ENCODE measurements at regions of chr9 and their contacts with region 1.

Region 1: GRCh38 chr9:114911167-114911821 is 19.1 kb downstream of the TNFSF8 start:
- DNase-seq: no peak
- H3K4me3 ChIP-seq: no peak overlapping the region
- H3K27ac ChIP-seq: no peak overlapping the region
- H3K4me1 ChIP-seq: peaks cover 0 to 10% (median 0%) of the 10 kb centered on the region in 4 donors
- H3K27me3 ChIP-seq: no peaks in the 10 kb centered on the region
- CTCF ChIP-seq: peak; percentile 30 to 58 (median 52)
- EP300 ChIP-seq: no peak
- POLR2A ChIP-seq: no peak

Region 2: GRCh38 chr9:114681594-114682332 is 229.5 kb before region 1 on chr9 and contains the start of gene TEX48:
- intact Hi-C with region 1: loop called (anchors 5 kb)
- DNase-seq: peak; percentile 71
- H3K4me3 ChIP-seq: no peak within 1 kb of the TSS
- H3K27ac ChIP-seq: no peak within 1 kb of the TSS
- H3K4me1 ChIP-seq: peaks cover 0 to 14% (median 10%) of the 10 kb centered on the region in 4 donors
- H3K27me3 ChIP-seq: no peaks in the 10 kb centered on the region
- CTCF ChIP-seq: peak in 3 of 4 experiments; percentile 35 to 45 (median 35)
- EP300 ChIP-seq: no peak
- POLR2A ChIP-seq: no peak
- total RNA-seq, gene TEX48: not detected

Region 3: GRCh38 chr9:114738581-114739316 is 172.5 kb before region 1 on chr9:
- intact Hi-C with region 1: loop called (anchors 5 kb)
- DNase-seq: peak; percentile 86
- H3K4me3 ChIP-seq: no peak overlapping the region
- H3K27ac ChIP-seq: no peak overlapping the region
- H3K4me1 ChIP-seq: no peaks in the 10 kb centered on the region
- H3K27me3 ChIP-seq: no peaks in the 10 kb centered on the region
- CTCF ChIP-seq: peak; percentile 65 to 80 (median 74)
- EP300 ChIP-seq: no peak
- POLR2A ChIP-seq: no peak

Region 4: GRCh38 chr9:114754581-114754980 is 156.7 kb before region 1 on chr9:
- intact Hi-C with region 1: no loop called
- DNase-seq: no peak
- H3K4me3 ChIP-seq: no peak overlapping the region
- H3K27ac ChIP-seq: no peak overlapping the region
- H3K4me1 ChIP-seq: no peaks in the 10 kb centered on the region
- H3K27me3 ChIP-seq: no peaks in the 10 kb centered on the region
- CTCF ChIP-seq: no peak
- EP300 ChIP-seq: no peak
- POLR2A ChIP-seq: no peak

Region 5: DNA sequence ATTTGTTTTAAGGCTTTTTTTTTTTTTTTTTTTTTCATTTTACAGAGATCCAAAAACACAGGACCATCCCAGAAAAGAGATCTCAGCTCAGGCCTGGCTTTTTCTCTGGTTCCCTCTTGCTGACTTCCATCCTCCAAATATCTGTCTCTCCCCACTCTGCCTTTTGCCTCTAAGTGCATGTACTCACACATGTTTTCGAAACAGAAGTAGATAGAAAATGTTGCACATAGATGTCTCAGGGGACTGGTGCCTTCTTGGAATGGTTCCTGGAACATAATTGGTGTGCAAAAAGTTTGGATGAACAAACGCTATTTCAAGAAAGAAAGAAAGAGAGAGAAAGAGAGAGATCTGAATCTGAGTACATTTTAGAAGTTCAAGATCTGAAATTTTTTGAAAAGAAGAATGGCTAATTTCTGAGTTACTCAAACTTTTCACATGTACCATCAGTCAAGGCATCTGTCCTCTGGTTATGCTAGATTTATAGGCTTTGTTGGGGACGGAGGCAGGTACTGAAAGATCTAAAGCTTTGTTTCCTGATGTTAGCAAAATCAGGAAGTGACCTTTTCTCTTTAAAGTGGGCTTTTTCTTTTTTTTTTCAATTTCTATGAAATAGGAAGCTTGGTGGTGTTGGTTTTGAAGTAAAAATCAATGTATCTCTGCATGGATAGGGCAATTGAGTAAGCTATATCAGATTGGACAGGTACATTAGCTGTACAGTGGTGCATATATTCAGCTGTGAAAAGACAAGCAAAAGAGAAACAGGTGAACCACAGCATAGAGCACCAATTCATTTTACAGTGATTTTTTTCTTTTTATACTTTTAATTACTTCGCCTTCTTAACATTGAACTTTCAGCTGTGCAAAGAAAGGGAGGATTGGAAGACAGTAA is 27.6 kb after region 1 on chr9:
- intact Hi-C with region 1: no loop called
- DNase-seq: no peak
- H3K4me3 ChIP-seq: no peak overlapping the region
- H3K27ac ChIP-seq: no peak overlapping the region
- H3K4me1 ChIP-seq: no peaks in the 10 kb centered on the region
- H3K27me3 ChIP-seq: no peaks in the 10 kb centered on the region
- CTCF ChIP-seq: no peak
- EP300 ChIP-seq: no peak
- POLR2A ChIP-seq: no peak